ENCODE measurements at regions of chr2 and their contacts with region 1.

Region 1: DNA sequence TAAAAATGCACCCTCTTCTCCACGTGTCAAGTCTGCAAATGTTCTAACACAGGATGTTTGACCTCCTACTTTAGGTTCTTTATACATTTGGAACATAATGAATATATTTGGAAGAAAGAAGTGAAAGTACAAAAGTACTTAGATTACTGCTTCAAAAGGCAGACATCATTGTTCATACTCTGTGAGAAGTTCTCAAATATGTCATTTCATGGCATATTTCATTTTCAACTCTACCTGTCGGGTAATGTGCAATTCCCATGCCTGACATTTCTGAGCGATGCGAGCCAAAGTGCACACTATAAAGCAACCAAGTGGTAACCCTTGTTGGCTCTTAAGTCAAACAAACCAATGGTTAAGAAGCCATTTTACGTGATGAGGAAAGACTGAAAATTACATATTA is 7.0 kb downstream of the BUB1 start:
- DNase-seq: no peak
- ATAC-seq: no peak
- H3K4me3 ChIP-seq: no peak overlapping the region
- H3K27ac ChIP-seq: no peak overlapping the region
- H3K4me1 ChIP-seq: peaks cover 7 to 13% of the 10 kb centered on the region in 2 experiments; a peak in 3 of 5 replicates
- H3K27me3 ChIP-seq: no peaks in the 10 kb centered on the region
- CTCF ChIP-seq: no peak
- EP300 ChIP-seq: no peak
- POLR2A ChIP-seq: no peak
- RAD21 ChIP-seq: no peak

Region 2: GRCh38 chr2:110657724-110658305 is 13.0 kb before region 1 on chr2:
- CTCF ChIA-PET with region 1: no interaction called
- POLR2A ChIA-PET with region 1: interaction called, 3 read pairs
- in situ Hi-C with region 1: no loop called
- intact Hi-C with region 1: loop called (anchors 2 kb)
- DNase-seq: no peak
- ATAC-seq: no peak
- H3K4me3 ChIP-seq: no peak overlapping the region
- H3K27ac ChIP-seq: no peak overlapping the region
- H3K4me1 ChIP-seq: no peaks in the 10 kb centered on the region
- H3K27me3 ChIP-seq: no peaks in the 10 kb centered on the region
- CTCF ChIP-seq: no peak
- EP300 ChIP-seq: no peak
- POLR2A ChIP-seq: 0 out of 2 replicates have a peak, but pooled peaks have one; percentile 26
- RAD21 ChIP-seq: no peak

Region 3: DNA sequence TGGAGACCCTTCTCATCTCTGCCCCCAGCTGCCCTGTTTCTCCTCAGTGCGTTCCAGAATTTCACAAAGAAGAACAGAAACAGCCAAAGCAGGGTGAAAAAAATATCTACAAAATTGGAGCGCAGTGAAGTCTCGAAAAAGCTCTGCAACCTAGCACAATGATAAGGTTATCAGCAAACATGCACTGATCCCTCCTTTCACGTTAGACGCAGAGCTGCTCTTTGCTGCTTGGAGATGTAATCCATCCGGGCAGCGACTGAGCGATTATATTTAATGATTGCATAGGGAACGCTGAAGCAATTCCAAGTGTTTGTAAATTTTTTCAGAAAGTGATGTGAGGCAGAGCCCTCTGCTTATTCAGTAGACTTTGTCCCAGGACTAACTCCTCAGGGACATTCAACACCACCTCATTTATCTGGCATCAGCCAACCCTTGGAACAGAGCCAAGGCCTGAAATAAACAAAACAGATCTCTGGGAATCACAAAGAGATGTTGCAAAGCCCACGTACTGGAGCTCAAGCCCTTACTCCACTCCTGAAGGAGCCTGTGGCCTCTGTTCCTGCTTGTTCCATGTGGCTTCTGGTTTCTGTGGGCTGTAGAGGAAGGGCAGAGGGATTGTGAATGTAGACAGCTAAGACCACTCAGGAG is 277.3 kb after region 1 on chr2:
- CTCF ChIA-PET with region 1: no interaction called
- POLR2A ChIA-PET with region 1: no interaction called
- in situ Hi-C with region 1: no loop called
- intact Hi-C with region 1: no loop called
- DNase-seq: peak in 1 of 4 experiments; percentile 11
- ATAC-seq: no peak
- H3K4me3 ChIP-seq: no peak overlapping the region
- H3K27ac ChIP-seq: no peak overlapping the region
- H3K4me1 ChIP-seq: 0 out of 5 replicates have a peak, but pooled peaks cover 0 to 3% of the 10 kb centered on the region in 2 experiments
- H3K27me3 ChIP-seq: peaks cover 0 to 14% of the 10 kb centered on the region in 2 experiments; a peak in 4 of 5 replicates
- CTCF ChIP-seq: no peak
- EP300 ChIP-seq: no peak
- POLR2A ChIP-seq: no peak
- RAD21 ChIP-seq: no peak

Measured in K562 (cell line).